ENCODE measurements at regions of chr2 and their contacts with region 1.

Region 1: GRCh38 chr2:64330281-64331113 is 123.5 kb upstream of the LGALSL start:
- DNase-seq: peak; percentile 52
- CTCF ChIP-seq: peak; percentile 95

Region 2: GRCh38 chr2:64263309-64263708 is 67.2 kb before region 1 on chr2:
- CTCF ChIA-PET with region 1: interaction called, 11 read pairs
- POLR2A ChIA-PET with region 1: no interaction called
- DNase-seq: no peak
- CTCF ChIP-seq: no peak

Region 3: DNA sequence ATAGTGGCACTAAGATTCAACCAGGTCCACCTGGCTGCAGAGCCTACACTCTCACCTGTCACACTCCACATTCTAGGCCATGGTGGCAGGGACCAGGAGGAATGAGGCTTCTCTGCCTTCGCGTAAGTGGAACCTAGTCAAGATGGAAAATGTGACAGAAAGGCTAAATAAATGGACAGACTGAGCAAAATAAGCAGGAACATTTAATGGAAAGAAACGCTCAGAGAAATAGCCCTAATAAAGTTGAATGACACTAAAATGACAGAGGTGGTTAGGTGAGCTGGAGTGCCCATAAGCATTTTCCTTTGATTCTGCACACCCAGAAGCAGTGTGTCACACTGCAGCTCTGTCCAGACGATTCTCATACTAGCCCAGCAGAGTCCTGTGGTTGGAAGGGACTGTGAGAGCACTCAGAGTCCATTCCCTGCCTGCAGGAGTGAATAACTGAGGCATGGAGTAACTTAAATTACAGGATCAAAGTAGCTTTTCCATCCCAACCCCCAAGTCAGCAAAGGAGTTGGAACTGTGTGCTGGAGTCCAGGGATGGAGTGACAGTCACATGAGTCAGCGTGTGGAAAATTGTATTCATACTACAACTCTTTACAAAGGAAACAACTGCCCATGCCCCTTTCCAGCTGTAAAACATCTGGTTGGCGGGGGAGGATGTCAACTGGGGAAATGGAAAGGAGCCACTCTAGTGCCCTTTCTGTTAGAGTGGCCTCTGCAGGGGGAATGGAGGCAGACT is 18.1 kb after region 1 on chr2:
- CTCF ChIA-PET with region 1: interaction called, 73 read pairs
- POLR2A ChIA-PET with region 1: no interaction called
- DNase-seq: no peak
- CTCF ChIP-seq: no peak

Region 4: DNA sequence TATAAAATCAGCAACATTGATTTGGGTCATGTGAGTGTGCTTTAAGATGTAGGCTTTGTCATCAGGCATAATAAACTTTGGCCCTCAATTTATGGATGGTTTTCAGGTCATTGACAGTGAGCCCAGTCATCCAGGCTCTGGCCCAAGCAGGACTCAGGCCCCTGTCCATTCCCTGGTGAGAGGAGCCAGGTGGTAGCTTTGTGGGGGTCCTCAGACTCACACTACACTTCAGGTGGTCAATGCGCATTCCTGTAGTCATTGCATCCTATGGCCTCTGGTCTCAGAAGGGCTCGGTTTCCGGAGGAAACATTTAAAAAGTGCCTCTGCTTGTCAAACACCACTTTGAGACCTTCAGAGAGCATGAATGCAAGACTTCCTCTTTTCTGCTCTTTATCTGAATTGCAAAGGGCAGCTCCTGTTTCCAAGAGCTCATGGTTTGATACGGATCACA is 143.6 kb after region 1 on chr2:
- CTCF ChIA-PET with region 1: interaction called, 312 read pairs
- POLR2A ChIA-PET with region 1: no interaction called
- DNase-seq: peak; percentile 26
- CTCF ChIP-seq: no peak

Region 5: GRCh38 chr2:64516628-64517510 is 186.4 kb after region 1 on chr2:
- CTCF ChIA-PET with region 1: interaction called, 16 read pairs
- POLR2A ChIA-PET with region 1: no interaction called
- DNase-seq: no peak
- CTCF ChIP-seq: no peak

Region 6: GRCh38 chr2:64864674-64865072 is 534.2 kb after region 1 on chr2:
- CTCF ChIA-PET with region 1: interaction called, 24 read pairs
- POLR2A ChIA-PET with region 1: no interaction called
- DNase-seq: peak; percentile 51
- CTCF ChIP-seq: no peak

Measured in GM10248 (cell line).